GM18951 (cell line): ENCODE measurements at regions of chr13 and their contacts with region 1.

Region 1: DNA sequence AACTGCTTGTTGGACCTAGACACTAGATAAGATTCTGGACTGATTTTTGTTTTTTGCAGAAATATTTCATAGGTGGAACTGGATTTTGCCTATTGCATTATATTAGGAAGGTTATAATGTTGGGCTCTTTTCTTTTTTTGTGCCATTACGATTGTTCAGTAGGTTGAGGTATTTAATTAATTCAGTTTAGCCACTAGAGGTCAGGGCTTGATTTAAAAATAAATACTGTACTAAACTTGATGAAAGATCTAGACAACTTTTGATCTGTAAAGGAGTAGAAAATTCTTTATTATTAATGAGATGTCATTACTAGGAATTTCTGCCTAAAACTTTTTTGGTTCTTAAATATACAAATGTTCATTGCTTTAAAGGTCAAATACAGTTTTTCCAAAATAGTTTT is 15.2 kb upstream of the SUPT20H start:
- POLR2A ChIP-seq: no peak

Region 2: DNA sequence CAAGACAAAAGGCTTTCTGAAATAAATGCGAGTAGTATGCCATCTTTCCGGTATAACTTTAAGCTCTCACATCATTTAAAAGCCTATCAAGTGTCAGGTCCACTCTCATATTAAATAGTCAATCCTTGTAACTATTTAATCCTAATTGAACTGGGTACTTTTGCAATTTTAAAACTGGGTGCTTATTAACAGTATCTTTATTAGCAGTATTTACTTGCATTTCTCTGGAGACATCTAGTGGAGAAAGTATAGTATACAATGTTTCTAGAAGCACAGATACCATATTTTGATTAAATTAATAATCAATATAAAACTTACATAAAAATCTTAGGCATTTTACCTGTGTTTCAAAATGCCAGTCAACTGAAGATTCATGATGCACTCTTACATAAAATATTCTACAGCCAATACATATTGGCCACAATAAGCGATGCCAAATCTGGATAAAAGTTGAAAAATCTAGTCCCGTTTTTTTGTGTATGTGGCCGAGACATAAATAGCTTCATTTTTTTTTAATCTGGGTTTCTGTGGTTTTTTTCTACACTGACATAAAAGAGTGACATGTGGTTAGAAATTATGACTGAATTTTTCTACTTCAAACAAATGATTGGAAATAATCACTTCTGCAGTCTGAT is 528.2 kb after region 1 on chr13:
- in situ Hi-C with region 1: loop called (anchors 25 kb)
- POLR2A ChIP-seq: no peak